Caco-2 (cell line): ENCODE measurements at regions of chr5 and their contacts with region 1.

Region 1: DNA sequence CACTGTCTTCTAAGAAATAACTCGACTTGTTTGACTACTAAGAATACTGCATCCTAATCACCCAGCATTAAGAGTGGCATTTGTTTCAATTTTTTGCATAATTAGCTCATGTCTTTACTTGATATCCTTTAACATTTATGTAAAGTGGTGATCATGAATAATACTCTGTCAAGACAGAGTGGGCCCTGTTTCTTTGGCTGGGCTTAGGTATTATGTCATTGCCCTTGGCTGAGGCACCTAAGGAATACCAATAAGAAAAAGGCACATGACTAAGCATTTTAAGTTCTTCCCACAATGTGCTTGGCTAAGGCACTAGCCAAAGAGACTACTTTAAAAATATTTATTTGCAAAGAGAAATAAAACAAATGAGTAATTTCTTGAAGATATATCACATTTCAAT is 308.1 kb downstream of the CTNND2 start:
- DNase-seq: peak in 1 of 2 experiments; percentile 6
- H3K4me3 ChIP-seq: no peak overlapping the region
- H3K4me3 Mint-ChIP-seq: no peak overlapping the region
- H3K27ac Mint-ChIP-seq: peak overlapping the region; percentile 60
- H3K4me1 ChIP-seq: peaks cover 42% of the 10 kb centered on the region
- H3K4me1 Mint-ChIP-seq: peaks cover 22% of the 10 kb centered on the region
- H3K27me3 ChIP-seq: no peaks in the 10 kb centered on the region
- H3K27me3 Mint-ChIP-seq: no peaks in the 10 kb centered on the region
- CTCF ChIP-seq: no peak

Region 2: DNA sequence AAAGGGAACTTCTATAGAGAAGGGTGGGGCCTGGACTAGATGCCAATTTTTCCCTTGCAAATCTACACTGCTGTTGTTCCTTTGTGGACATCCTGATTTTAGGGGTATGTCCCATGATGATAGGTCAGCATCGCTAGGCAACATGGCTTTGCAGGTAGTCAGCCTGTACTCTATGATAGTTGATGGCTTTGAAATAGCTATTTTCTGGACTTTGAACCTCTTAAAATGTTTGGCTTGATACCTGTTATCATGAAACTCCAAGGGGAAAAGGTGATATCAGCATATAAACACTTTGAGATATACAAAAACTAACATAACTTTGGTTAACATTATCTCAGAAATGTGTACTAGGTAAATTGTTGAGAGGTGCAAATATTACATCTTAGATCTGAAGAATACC is 225.2 kb before region 1 on chr5:
- CTCF ChIA-PET with region 1: interaction called, 3 read pairs
- POLR2A ChIA-PET with region 1: no interaction called
- intact Hi-C with region 1: loop called (anchors 1 kb)
- DNase-seq: peak; percentile 71 to 81
- H3K4me3 ChIP-seq: no peak overlapping the region
- H3K4me3 Mint-ChIP-seq: no peak overlapping the region
- H3K27ac Mint-ChIP-seq: peak overlapping the region; percentile 1
- H3K4me1 ChIP-seq: peaks cover 46% of the 10 kb centered on the region
- H3K4me1 Mint-ChIP-seq: no peaks in the 10 kb centered on the region
- H3K27me3 ChIP-seq: no peaks in the 10 kb centered on the region
- H3K27me3 Mint-ChIP-seq: no peaks in the 10 kb centered on the region
- CTCF ChIP-seq: no peak

Region 3: DNA sequence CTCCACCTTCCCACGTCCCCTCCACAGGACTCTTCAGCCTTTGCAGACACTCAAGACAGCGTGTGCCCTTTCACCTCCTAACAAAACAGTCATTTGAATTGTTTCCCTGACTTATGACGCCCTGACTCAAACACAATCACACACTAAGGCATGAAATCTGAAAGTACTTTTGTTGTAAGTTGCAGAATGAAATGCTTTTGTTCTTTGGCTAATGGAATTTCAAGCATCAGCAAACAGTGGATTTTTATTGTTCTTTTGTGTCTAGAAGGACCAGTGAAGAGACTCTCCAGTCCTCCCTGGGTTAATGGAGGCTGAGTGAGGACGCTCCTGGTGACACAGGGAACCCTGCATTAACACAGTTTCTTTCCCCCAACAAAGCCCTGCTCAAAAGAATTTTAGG is 72.0 kb before region 1 on chr5:
- CTCF ChIA-PET with region 1: no interaction called
- POLR2A ChIA-PET with region 1: no interaction called
- intact Hi-C with region 1: loop called (anchors 1 kb)
- DNase-seq: peak; percentile 45 to 47
- H3K4me3 ChIP-seq: no peak overlapping the region
- H3K4me3 Mint-ChIP-seq: no peak overlapping the region
- H3K27ac Mint-ChIP-seq: peak overlapping the region; percentile 77
- H3K4me1 ChIP-seq: peaks cover 50% of the 10 kb centered on the region
- H3K4me1 Mint-ChIP-seq: peaks cover 30% of the 10 kb centered on the region
- H3K27me3 ChIP-seq: no peaks in the 10 kb centered on the region
- H3K27me3 Mint-ChIP-seq: no peaks in the 10 kb centered on the region
- CTCF ChIP-seq: no peak

Region 4: DNA sequence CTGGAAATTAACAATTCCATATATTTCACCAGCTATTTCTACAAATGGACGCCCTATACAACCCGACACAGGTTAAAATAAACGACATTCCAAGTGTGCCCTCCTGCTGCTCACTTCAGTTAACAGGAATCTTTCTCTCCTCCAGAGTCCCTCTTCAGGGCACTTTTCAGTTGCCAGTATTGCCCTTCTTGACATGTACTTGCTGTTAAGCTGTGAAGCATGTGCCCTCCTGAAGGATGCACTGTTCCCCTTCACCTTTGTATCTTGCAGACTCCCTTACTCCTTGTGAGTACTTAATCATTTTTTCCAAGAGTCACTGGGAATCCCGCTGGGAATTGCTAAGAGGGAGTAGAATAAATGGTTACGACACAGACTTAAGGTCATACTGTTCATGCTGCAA is 56.1 kb before region 1 on chr5:
- CTCF ChIA-PET with region 1: no interaction called
- POLR2A ChIA-PET with region 1: no interaction called
- intact Hi-C with region 1: no loop called
- DNase-seq: no peak
- H3K4me3 ChIP-seq: no peak overlapping the region
- H3K4me3 Mint-ChIP-seq: no peak overlapping the region
- H3K27ac Mint-ChIP-seq: no peak overlapping the region
- H3K4me1 ChIP-seq: no peaks in the 10 kb centered on the region
- H3K4me1 Mint-ChIP-seq: no peaks in the 10 kb centered on the region
- H3K27me3 ChIP-seq: no peaks in the 10 kb centered on the region
- H3K27me3 Mint-ChIP-seq: no peaks in the 10 kb centered on the region
- CTCF ChIP-seq: no peak

Region 5: DNA sequence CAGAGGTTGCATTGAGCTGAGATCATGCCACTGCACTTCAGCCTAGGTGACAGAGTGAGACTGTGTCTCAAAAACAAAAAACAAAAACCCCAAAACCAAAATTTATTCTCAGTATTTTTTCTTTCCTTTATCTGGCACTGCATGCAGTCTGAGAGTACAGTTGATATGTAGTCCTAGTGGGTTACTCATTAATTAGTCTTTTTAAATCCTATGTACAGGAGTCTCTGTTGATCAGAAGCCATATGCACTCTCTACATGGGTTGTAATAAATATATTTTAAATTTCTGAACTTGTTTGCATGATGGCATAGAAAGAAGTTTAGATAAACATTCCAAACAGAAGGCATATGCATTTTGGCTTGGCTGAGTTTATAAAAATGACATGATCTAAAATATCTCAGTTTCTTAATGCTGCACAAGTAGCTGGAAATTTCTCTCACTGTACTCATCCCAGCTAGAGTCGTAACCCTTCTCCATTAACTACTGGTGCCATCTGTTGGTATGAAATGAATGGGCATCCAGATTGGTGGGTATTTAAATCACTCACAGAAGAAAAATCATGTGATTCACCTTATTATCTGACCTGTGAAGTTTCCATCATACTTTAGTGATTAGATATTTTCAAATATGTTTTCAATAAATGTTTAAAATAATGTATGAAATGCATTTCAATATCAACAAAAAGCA is 23.3 kb after region 1 on chr5:
- CTCF ChIA-PET with region 1: interaction called, 4 read pairs
- POLR2A ChIA-PET with region 1: no interaction called
- intact Hi-C with region 1: loop called (anchors 2 kb)
- DNase-seq: peak in 1 of 2 experiments; percentile 44
- H3K4me3 ChIP-seq: no peak overlapping the region
- H3K4me3 Mint-ChIP-seq: no peak overlapping the region
- H3K27ac Mint-ChIP-seq: no peak overlapping the region
- H3K4me1 ChIP-seq: peaks cover 4% of the 10 kb centered on the region
- H3K4me1 Mint-ChIP-seq: peaks cover 14% of the 10 kb centered on the region
- H3K27me3 ChIP-seq: no peaks in the 10 kb centered on the region
- H3K27me3 Mint-ChIP-seq: no peaks in the 10 kb centered on the region
- CTCF ChIP-seq: peak; percentile 22 to 42